Activated CD4-positive, alpha-beta memory T cell treated with anti-CD3 and anti-CD28 coated beads, Interleukin-2, amount 10 ng/mL, durations not matched to agents 7 days and 5 days (primary cell): ENCODE measurements at regions of chr15 and their contacts with region 1.

Region 1: GRCh38 chr15:78195735-78196201 is 38.6 kb downstream of the ACSBG1 start:
- DNase-seq: peak; percentile 58
- H3K4me3 Mint-ChIP-seq: no peak overlapping the region
- H3K27ac Mint-ChIP-seq: no peak overlapping the region
- H3K4me1 Mint-ChIP-seq: no peaks in the 10 kb centered on the region
- H3K27me3 Mint-ChIP-seq: no peaks in the 10 kb centered on the region

Region 2: GRCh38 chr15:77959432-77959879 is 236.3 kb before region 1 on chr15:
- CTCF ChIA-PET with region 1: interaction called, 20 read pairs
- POLR2A ChIA-PET with region 1: no interaction called
- DNase-seq: peak; percentile 82
- H3K4me3 Mint-ChIP-seq: peak overlapping the region; percentile 60
- H3K27ac Mint-ChIP-seq: no peak overlapping the region
- H3K4me1 Mint-ChIP-seq: peaks cover 32% of the 10 kb centered on the region
- H3K27me3 Mint-ChIP-seq: peaks cover 34% of the 10 kb centered on the region

Region 3: DNA sequence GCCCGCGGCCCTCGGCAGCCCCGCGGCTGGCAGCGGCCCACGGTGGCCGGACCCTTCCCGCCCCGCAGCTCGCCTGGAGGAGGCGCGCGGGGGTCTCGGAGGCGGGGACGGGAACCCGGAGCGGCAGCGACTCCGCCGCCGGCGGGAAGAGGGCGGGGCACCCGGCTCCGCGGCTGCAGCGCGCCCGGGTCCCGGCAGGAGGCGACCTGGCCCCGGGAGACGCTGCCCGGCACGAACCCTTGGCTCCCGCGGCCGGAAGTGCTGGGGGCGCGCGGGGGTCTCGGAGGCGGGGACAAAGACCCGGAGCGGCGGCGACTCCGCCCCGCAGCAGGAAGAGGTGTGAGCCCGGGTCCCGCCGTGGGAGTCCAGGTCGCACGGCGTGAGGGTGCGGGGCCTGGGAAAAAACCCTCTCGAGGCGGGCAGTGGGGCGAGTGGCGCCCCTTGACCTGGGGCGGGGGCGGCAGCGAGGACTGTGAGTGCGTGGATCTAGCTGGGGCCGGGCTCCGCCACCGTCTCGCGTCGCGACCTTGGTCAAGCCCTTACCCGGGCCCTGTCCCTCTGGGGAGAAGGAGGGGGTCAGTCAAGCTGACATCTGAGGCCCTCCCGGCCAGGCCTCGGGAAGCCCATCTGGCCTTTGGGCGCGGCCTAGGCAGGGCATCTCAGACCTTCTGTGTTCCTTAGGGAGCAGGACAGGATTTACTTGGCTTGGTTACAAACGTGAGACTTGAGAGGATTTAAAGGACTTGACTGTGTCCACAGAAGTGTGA is 64.3 kb before region 1 on chr15 and contains the start of gene CIB2:
- CTCF ChIA-PET with region 1: interaction called, 74 read pairs
- POLR2A ChIA-PET with region 1: interaction called, 8 read pairs
- DNase-seq: peak; percentile 81
- H3K4me3 Mint-ChIP-seq: peak within 1 kb of the TSS; percentile 79
- H3K27ac Mint-ChIP-seq: no peak within 1 kb of the TSS
- H3K4me1 Mint-ChIP-seq: peaks cover 23% of the 10 kb centered on the region
- H3K27me3 Mint-ChIP-seq: peaks cover 2% of the 10 kb centered on the region
- total RNA-seq, gene CIB2: 0.91 to 1.1 TPM

Region 4: GRCh38 chr15:78162038-78162437 is 33.7 kb before region 1 on chr15:
- CTCF ChIA-PET with region 1: interaction called, 12 read pairs
- POLR2A ChIA-PET with region 1: no interaction called
- DNase-seq: peak; percentile 46
- H3K4me3 Mint-ChIP-seq: no peak overlapping the region
- H3K27ac Mint-ChIP-seq: peak overlapping the region; percentile 58
- H3K4me1 Mint-ChIP-seq: peaks cover 18% of the 10 kb centered on the region
- H3K27me3 Mint-ChIP-seq: no peaks in the 10 kb centered on the region

Region 5: DNA sequence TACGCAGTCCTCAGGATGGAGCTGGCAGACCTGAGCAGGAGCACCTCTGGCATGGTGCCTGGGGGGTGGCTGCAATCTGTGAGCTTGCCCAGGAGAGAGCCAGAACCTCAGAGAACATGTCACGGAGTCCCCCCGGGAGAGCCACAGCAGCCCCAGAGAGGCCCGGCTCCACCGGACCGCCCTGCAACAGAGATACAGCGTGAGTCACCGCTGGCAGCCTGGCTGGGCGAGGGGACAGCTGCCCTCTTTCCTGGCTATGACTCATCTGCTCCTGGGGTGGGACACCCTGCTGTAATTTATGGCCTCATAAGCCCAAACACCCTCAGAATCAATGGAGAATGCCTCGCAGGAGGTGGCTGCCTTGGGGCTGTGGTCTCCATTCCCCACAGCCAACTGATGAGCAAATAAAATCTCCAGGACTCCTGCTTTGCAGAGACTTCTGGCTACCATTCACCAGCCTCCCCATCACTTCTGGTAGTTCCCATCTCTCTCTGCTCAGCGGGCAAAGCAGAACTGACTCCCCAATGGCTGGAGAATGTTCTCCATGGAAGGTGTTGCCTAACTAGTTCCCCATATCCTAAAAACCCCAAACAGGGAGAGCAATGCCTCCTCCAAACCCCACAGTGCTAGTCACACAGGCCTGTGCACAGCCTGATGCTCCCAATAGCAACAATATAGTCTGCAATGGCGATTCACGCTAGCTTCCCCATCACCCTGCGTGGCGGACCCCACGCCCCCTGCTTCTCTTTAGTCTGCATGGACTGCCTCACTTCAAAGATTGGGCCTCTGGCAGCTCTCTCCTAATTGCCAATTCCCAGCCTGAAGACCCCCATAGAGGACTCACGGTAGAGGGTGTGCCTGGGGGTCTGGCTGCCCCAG is 17.0 kb after region 1 on chr15:
- CTCF ChIA-PET with region 1: interaction called, 11 read pairs
- POLR2A ChIA-PET with region 1: no interaction called
- DNase-seq: no peak
- H3K4me3 Mint-ChIP-seq: no peak overlapping the region
- H3K27ac Mint-ChIP-seq: no peak overlapping the region
- H3K4me1 Mint-ChIP-seq: no peaks in the 10 kb centered on the region
- H3K27me3 Mint-ChIP-seq: peaks cover 15% of the 10 kb centered on the region